ENCODE measurements at regions of chr15 and their contacts with region 1.

Region 1: DNA sequence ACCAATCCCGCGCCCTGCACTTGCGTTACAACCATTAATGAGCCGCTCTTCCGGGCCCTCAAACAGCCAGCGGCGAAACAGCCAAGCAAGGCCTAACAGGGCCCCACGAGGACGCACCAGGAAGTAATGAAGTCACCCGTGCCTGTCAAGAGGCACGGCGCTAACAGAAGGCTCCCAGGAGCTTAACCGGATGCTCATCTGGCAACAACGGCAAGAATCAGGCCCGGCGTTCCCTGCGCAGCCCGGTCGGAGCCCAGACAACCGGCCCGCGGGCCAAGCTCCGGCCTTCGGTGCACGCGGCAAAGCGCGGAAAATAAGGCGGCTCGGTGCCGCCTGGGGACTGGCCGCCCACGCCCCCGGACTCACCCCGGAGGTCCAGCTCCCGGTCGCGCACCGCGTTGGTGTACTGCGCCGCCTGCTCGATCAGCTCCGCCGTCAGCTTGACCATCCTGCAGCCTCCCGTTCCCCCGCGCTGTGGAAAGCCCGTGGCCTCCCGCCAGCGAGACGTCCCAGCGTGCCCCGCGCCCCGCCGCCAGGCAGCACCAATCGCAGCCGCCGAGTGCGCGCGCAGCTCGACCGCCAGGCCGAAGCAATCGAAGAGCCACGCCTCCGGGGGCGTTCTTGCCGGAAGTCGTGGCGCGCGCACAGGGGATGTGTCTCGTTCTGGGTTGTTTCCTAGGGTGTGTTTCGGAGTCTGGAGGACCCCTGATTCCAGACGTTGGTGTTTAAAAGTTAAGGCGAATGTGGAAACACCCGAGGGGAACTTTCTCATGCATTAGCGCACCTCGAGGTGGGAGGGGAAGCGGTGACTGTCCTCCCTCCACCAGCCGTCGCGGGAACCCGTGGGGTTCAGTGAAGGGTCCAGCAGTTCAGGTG is at the start of gene SNRPA1:
- DNase-seq: peak; percentile 99
- H3K4me3 Mint-ChIP-seq: peak within 1 kb of the TSS; percentile 90
- H3K27ac Mint-ChIP-seq: peak within 1 kb of the TSS; percentile 96
- H3K4me1 Mint-ChIP-seq: peaks cover 38% of the 10 kb centered on the region
- H3K27me3 Mint-ChIP-seq: no peaks in the 10 kb centered on the region
- total RNA-seq, gene SNRPA1: 195 and 210 TPM in 2 replicates

Region 2: GRCh38 chr15:100602064-100602822 is 692.7 kb before region 1 on chr15 and contains the starts of genes ASB7 and LINS1:
- intact Hi-C with region 1: loop called (anchors 5 kb)
- DNase-seq: peak; percentile 100
- H3K4me3 Mint-ChIP-seq: no peak within 1 kb of the TSS
- H3K27ac Mint-ChIP-seq: no peak within 1 kb of the TSS
- H3K4me1 Mint-ChIP-seq: peaks cover 54% of the 10 kb centered on the region
- H3K27me3 Mint-ChIP-seq: no peaks in the 10 kb centered on the region
- total RNA-seq, gene ASB7: 17.8 and 18.0 TPM in 2 replicates
- total RNA-seq, gene LINS1: 63.9 and 64.9 TPM in 2 replicates

Region 3: DNA sequence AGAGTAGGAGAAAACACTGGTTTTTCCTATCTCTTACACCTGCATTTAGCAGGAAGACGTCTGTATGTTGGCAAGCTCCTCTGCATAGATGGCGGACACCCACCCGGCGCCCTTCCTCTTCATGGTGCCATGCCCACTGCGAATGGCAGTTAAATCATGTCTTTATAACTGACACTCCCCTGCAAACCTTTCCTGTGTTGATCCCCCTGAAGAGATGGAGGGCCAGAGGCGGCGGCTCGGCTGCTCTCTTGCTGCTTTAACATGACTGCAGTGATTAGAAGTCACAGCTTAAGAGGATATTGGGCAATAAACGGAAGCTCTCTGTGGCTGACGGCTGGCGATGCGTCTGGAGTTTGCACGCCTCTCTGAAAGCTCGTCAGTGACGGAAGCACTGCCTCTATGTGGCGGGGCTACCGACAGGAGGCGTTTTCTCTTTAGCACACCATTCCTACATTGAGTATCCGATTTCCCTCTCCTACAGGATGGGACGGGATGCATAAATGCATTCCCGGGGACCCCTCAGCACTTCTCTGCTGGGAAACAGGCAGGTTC is 25.6 kb after region 1 on chr15:
- intact Hi-C with region 1: loop called (anchors 2 kb)
- DNase-seq: peak; percentile 89
- H3K4me3 Mint-ChIP-seq: peak overlapping the region; percentile 80
- H3K27ac Mint-ChIP-seq: peak overlapping the region; percentile 84
- H3K4me1 Mint-ChIP-seq: peaks cover 14% of the 10 kb centered on the region
- H3K27me3 Mint-ChIP-seq: no peaks in the 10 kb centered on the region

Region 4: DNA sequence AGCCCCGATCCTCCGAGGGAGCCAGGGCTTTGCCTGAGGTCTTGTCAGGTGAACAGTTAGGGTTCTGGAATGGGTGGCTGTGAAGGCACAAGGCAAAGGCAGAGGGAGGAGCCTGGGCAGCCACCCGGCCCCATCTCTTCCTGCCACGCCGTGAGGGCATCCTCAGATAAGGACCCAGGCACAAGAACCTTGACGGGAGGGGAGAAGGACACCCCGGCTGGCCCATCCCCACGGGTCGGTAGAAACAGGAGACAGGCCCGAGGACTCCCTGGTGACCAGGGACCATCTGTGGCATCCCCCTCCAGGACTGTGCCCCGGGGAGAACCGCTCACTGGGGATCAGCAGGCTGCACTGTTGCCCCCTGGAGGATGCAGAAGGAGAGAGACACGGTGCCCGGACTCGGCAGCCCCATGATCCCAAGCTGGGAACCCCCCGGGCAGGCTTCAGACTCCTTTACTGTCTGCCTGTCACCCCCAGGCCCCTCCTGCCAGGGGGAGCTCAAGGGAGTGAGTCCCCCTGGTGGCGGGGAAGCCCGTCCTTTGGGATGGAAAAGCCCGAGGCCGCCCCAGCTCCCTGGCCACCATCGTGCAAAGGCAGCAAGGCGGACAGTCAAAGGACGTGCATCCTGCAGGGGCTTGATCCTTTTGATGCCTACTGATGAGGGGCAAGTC is 206.9 kb after region 1 on chr15:
- intact Hi-C with region 1: loop called (anchors 1 kb)
- DNase-seq: peak; percentile 84
- H3K4me3 Mint-ChIP-seq: peak overlapping the region; percentile 75
- H3K27ac Mint-ChIP-seq: peak overlapping the region; percentile 42
- H3K4me1 Mint-ChIP-seq: peaks cover 28% of the 10 kb centered on the region
- H3K27me3 Mint-ChIP-seq: peaks cover 9% of the 10 kb centered on the region

Region 5: DNA sequence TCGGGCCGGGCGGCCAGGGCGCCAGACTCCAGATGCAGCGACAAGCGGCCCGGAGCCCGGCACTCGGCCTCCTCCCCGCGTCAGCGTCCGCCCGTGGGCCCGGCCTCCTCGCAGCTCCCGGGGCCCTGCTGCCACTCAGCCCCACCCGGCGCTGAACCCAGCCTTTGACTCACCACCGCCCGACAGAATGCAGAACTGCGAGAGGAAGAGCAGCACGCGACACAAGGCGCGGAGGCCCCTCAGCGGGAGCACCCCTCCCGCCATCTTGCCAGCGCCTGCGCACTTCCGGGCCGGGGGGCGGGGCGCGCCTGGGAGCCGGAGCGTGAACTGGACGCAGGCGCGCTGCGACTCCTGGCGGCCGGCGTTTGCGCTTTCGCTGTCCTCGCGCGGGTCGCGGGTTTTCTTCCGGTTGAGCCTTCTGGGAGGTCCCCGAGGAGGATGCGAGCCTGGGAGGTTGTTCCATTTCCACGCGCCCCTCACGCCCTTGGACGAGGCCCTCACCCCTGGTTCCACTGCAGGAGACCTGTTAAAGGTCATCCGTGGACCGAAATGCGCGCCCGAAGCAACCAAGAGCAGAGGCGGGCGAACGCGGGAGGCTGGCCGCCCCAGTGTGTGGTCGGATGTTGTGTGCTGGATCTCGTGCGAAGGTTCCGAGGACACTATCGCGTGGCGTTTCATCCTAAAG is 357.3 kb after region 1 on chr15 and contains the start of gene TM2D3:
- intact Hi-C with region 1: loop called (anchors 1 kb)
- DNase-seq: peak; percentile 99
- H3K4me3 Mint-ChIP-seq: peak within 1 kb of the TSS; percentile 86
- H3K27ac Mint-ChIP-seq: peak within 1 kb of the TSS; percentile 86
- H3K4me1 Mint-ChIP-seq: peaks cover 32% of the 10 kb centered on the region
- H3K27me3 Mint-ChIP-seq: no peaks in the 10 kb centered on the region
- total RNA-seq, gene TM2D3: 56.2 and 62.7 TPM in 2 replicates